Dendritic cell treated with granulocyte-macrophage colony-stimulating factor and Interleukin-4, amounts not matched to agents 40 ng/mL and 50 ng/mL, for 4 days (primary cell): ENCODE measurements at regions of chr11 and their contacts with region 1.

Region 1: DNA sequence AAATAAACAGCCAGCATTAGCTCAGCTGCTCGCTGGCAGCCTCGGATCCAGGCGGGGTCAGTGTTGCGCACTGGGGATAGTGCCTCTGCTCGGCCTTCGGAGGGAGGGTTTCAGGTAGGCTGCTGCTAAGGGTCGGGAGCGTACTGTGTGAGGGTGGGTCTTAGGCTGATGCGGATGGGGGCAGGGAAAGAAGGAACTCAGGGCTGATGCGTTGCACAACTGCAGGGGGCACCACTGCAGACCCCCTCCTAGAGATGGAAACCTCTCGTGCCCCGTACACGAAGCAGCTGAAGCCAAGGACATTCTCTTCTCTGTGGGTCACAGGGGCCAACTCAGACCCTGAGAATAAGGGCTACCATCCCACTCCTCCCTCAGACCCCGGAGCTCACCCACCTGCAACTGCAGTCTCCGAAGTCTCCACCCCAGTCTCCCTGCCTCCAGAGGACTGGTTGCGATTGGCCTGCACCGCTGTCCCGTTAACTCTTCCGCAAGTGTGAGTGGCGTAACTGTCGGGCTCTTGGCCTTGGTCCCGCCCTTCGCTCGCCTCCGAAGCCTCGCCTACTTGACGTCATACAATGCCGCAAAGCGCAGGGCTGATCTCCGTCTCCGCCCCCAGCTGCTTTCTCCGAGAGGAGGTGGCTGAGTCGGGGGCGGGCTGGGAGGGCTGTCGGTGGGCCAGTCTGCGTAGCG is at the start of gene KBTBD3:
- H3K4me3 Mint-ChIP-seq: peak within 1 kb of the TSS; percentile 96
- H3K27ac Mint-ChIP-seq: peak within 1 kb of the TSS; percentile 96
- H3K4me1 Mint-ChIP-seq: peaks cover 30% of the 10 kb centered on the region
- H3K27me3 Mint-ChIP-seq: no peaks in the 10 kb centered on the region

Region 2: GRCh38 chr11:106021967-106022794 is 54.9 kb before region 1 on chr11 and contains the start of gene MSANTD4:
- intact Hi-C with region 1: loop called (anchors 1 kb)
- H3K4me3 Mint-ChIP-seq: peak within 1 kb of the TSS; percentile 78
- H3K27ac Mint-ChIP-seq: peak within 1 kb of the TSS; percentile 82
- H3K4me1 Mint-ChIP-seq: peaks cover 35% of the 10 kb centered on the region
- H3K27me3 Mint-ChIP-seq: peaks cover 3% of the 10 kb centered on the region

Region 3: DNA sequence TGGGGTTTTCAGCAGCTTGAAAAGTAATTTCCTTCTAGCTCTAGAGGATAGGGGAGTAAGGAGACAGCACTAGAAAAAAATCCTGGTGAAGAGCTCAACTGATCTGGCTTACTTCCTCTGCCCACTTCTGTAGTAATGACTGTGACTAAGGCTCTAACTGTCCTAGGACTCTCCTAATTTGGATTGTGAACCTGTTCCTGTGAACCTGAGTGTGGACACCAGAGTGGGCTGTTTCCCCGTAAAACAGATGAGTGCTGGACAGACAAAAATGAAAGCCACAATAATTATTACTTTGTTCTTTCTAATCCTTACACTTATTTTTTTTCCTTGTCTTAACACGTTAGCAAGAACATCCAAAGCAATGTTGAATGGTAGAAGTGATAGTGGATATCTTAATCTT is 154.5 kb after region 1 on chr11:
- intact Hi-C with region 1: no loop called
- H3K4me3 Mint-ChIP-seq: no peak overlapping the region
- H3K27ac Mint-ChIP-seq: no peak overlapping the region
- H3K4me1 Mint-ChIP-seq: no peaks in the 10 kb centered on the region
- H3K27me3 Mint-ChIP-seq: no peaks in the 10 kb centered on the region